WTC11 (cell line): ENCODE measurements at regions of chr1 and their contacts with region 1.

Region 1: DNA sequence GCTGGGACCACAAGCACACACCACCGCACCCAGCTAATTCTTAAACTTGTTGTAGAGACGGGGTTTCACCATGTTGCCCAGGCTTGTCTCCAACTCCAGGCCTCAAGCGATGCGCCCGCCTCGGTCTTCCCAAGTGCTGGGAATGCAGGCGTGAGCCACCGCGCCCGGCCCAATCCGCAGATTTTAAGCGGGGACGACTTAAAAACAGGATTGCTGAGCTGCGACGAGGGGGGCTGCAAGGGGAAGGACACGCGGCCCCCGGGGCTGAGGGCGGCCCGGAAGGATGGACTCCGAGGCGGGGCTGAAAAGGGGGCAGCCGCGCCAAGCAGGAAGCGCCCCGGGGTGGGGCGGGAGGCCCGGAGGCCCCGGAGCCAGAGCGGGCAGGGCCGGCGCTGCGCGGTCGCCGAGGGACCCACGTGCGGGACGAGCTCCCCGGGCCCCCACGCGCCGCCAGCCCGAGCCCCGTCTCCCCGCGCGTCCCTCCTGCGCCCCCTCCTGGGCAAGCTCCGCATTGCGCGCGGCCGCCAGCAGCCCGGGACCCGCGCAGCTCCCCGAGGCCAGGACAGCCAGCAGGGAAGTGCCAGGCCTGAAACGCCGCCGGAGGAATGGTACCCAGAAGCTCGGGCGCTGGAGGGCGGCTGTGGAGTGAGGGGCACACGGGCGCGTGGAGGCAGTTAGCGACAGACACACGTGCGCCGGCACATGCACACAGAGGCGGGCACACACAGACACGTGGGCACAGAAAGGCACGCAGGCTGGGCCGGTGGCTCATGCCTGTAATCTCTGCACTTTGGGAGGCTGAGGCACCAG is 5.5 kb upstream of the PRKCZ start:
- DNase-seq: peak; percentile 80
- ATAC-seq: peak; percentile 9
- H3K4me3 Mint-ChIP-seq: peak overlapping the region; percentile 27
- H3K27ac Mint-ChIP-seq: no peak overlapping the region
- H3K4me1 Mint-ChIP-seq: peaks cover 23% of the 10 kb centered on the region
- H3K27me3 Mint-ChIP-seq: peaks cover 13% of the 10 kb centered on the region; the same call in 1 of the 2 replicates
- CTCF ChIP-seq: peak; percentile 94

Region 2: GRCh38 chr1:1528301-1529267 is 516.1 kb before region 1 on chr1:
- CTCF ChIA-PET with region 1: no interaction called
- POLR2A ChIA-PET with region 1: no interaction called
- DNase-seq: no peak
- ATAC-seq: no peak
- H3K4me3 Mint-ChIP-seq: no peak overlapping the region
- H3K27ac Mint-ChIP-seq: no peak overlapping the region
- H3K4me1 Mint-ChIP-seq: no peaks in the 10 kb centered on the region
- H3K27me3 Mint-ChIP-seq: no peaks in the 10 kb centered on the region
- CTCF ChIP-seq: no peak

Region 3: DNA sequence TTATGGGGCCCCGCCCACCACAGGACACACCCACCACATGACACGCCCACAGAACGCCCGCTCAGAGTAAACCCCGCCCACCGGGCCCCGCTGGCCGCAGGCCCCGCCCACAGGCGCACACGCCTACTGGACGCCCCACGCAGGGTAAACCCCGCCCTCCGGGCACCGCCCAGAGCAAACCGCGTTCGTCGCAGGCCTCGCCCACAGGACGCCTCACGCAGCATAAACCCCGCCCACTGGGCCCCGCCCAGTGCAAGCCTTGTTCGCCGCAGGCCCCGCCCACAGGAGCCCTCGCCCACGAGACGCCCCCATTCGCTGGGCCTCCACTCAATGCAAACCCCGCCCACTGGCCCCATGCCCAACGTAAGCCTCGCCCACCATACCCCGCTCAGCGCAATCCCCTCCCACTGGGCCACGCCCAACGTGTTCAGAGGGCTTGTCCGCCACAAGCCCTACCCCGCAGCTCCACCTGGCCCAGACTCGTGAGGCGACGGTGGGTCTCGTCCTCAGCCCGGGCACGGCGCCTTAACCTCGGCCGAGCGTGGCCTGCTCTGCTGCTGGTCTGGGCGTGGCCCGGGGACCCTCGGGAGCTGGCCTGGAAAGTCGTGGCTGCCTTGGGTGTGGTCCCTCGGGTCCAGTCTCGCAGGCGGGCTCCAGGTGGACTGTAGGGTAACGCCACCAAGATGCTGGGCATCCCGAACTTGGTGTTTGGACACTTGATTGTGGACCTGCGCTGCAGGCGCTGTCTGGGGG is 125.2 kb before region 1 on chr1:
- CTCF ChIA-PET with region 1: interaction called, 46 read pairs
- POLR2A ChIA-PET with region 1: interaction called, 7 read pairs
- DNase-seq: peak; percentile 100
- ATAC-seq: peak; percentile 87
- H3K4me3 Mint-ChIP-seq: peak overlapping the region; percentile 30
- H3K27ac Mint-ChIP-seq: no peak overlapping the region
- H3K4me1 Mint-ChIP-seq: peaks cover 7% of the 10 kb centered on the region; the same call in 1 of the 2 replicates
- H3K27me3 Mint-ChIP-seq: no peaks in the 10 kb centered on the region
- CTCF ChIP-seq: no peak

Region 4: DNA sequence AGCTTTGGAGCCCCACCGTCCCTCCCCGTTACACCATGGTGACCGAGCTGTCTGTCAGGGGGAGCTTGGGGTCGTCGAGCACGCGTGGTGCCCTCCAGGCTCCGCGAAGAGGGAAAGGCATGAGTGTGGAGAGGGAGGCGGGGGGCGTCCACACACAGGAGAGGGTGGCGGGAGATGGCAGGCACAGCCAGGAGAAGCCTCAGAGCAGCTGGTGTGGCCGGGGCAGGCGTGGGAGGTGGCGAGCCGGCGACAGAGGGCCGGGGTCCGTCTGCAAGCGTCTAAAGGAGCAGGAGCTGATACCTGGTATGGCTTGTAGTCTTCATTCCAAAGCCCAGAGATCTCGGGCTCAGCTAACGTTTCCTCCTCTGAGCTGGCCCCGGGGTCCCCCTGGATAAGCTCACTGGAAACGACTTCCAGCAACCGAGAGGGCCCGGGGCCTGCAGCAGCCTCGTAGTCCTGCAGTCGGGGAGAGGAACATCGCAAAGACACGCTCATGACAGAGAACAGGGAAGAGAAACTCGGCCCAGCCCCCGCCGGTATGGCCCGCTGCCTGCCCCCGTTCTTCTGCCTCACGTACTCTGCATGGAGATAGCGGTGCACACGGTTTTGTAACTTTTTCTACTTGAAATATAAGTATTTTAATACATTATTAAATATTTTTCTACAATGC is 78.5 kb before region 1 on chr1:
- CTCF ChIA-PET with region 1: interaction called, 312 read pairs
- POLR2A ChIA-PET with region 1: no interaction called
- DNase-seq: no peak
- ATAC-seq: no peak
- H3K4me3 Mint-ChIP-seq: no peak overlapping the region
- H3K27ac Mint-ChIP-seq: no peak overlapping the region
- H3K4me1 Mint-ChIP-seq: peaks cover 4% of the 10 kb centered on the region
- H3K27me3 Mint-ChIP-seq: no peaks in the 10 kb centered on the region; the same call in 1 of the 2 replicates
- CTCF ChIP-seq: no peak

Region 5: GRCh38 chr1:2019172-2019543 is 25.6 kb before region 1 on chr1 and contains the start of gene GABRD:
- CTCF ChIA-PET with region 1: interaction called, 89 read pairs
- POLR2A ChIA-PET with region 1: no interaction called
- DNase-seq: peak; percentile 51
- ATAC-seq: peak; percentile 56
- H3K4me3 Mint-ChIP-seq: peak within 1 kb of the TSS; percentile 79
- H3K27ac Mint-ChIP-seq: peak within 1 kb of the TSS; percentile 65; the same call in 1 of the 2 replicates
- H3K4me1 Mint-ChIP-seq: peaks cover 8% of the 10 kb centered on the region
- H3K27me3 Mint-ChIP-seq: peaks cover 31% of the 10 kb centered on the region
- CTCF ChIP-seq: no peak
- total RNA-seq, gene GABRD: 1.7 to 2.0 TPM (median 1.8 TPM) in 3 replicates

Region 6: GRCh38 chr1:2115681-2116341 is 71.1 kb after region 1 on chr1:
- CTCF ChIA-PET with region 1: interaction called, 19 read pairs
- POLR2A ChIA-PET with region 1: no interaction called
- DNase-seq: peak; percentile 72
- ATAC-seq: peak; percentile 94
- H3K4me3 Mint-ChIP-seq: peak overlapping the region; percentile 55
- H3K27ac Mint-ChIP-seq: peak overlapping the region; percentile 82
- H3K4me1 Mint-ChIP-seq: peaks cover 30% of the 10 kb centered on the region
- H3K27me3 Mint-ChIP-seq: no peaks in the 10 kb centered on the region
- CTCF ChIP-seq: no peak

Region 7: DNA sequence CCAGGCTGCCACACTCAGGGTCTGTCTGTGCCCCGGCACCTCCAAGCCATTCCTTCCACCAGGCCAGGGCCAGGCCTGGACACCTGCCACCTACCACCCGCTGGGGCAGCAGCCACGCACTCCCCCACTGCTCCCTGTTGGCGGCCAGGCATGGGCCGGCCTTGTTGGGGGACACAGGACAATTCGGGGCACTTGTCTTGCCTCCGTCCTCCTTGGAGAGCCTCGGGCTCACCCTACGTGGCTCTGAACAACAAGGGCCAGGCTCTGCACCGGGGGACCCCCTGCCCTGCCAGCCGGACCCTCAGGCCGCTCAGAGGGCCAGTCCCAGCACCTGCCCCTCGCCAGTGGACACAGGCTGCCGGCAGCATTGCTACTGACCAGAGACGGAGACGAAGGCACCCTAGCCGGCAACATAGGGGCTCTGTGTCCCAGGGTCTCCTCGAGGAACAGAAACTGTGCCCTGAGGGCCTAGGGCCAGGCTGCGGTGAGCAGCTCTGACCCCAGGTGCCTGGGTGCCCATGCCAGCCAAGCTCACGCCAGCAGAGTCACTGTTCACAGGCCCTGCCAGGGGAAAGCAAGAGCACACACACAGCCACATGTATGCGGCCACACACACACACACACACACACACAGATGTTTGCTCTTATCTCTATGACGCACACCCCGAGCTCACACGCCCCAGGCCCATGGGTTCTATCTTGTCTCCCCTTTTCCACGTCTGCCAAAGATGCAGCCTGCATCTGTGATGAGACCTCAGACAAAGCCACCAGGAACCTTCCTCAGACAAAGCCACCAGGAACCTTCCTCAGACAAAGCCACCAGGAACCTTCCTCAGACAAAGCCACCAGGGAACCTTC is 300.7 kb after region 1 on chr1:
- CTCF ChIA-PET with region 1: no interaction called
- POLR2A ChIA-PET with region 1: no interaction called
- DNase-seq: no peak
- ATAC-seq: no peak
- H3K4me3 Mint-ChIP-seq: no peak overlapping the region
- H3K27ac Mint-ChIP-seq: peak overlapping the region; percentile 70; the same call in 1 of the 2 replicates
- H3K4me1 Mint-ChIP-seq: no peaks in the 10 kb centered on the region
- H3K27me3 Mint-ChIP-seq: no peaks in the 10 kb centered on the region
- CTCF ChIP-seq: no peak